Endothelial cell of umbilical vein (primary cell): ENCODE measurements at regions of chr4 and their contacts with region 1.

Region 1: GRCh38 chr4:38804654-38805295 is at the start of gene TLR1:
- DNase-seq: peak; percentile 89
- H3K4me3 ChIP-seq: peak within 1 kb of the TSS in 2 of 3 experiments; percentile 11 to 54
- H3K27ac ChIP-seq: peak within 1 kb of the TSS; percentile 30
- H3K4me1 ChIP-seq: peaks cover 19% of the 10 kb centered on the region
- H3K27me3 ChIP-seq: no peaks in the 10 kb centered on the region
- CTCF ChIP-seq: peak; percentile 15 to 36
- POLR2A ChIP-seq: no peak
- total RNA-seq, gene TLR1: 2.7 and 4.6 TPM in 2 replicates

Region 2: DNA sequence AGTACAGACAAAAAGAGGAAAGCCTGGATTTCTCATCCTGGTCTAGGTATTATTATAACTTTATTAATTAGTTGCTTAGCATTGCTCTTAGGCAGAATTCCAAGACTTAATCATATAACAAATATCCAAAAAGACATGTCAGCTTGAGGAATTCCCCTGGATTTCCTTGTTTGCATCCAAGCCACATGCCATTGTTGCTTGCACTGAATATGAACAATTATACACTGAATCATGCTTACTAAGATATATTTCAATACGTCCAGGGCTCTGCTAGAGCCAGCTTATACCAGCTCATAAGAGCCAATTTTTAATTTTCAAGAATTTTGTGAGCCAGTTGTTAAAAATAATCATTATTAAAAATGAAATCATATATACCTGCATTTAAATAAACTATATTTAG is 16.4 kb before region 1 on chr4:
- CTCF ChIA-PET with region 1: interaction called, 31 read pairs
- POLR2A ChIA-PET with region 1: no interaction called
- dilution Hi-C with region 1: no loop called
- intact Hi-C with region 1: no loop called
- DNase-seq: peak; percentile 57
- H3K4me3 ChIP-seq: no peak overlapping the region
- H3K27ac ChIP-seq: no peak overlapping the region
- H3K4me1 ChIP-seq: no peaks in the 10 kb centered on the region
- H3K27me3 ChIP-seq: no peaks in the 10 kb centered on the region
- CTCF ChIP-seq: no peak
- POLR2A ChIP-seq: no peak

Region 3: DNA sequence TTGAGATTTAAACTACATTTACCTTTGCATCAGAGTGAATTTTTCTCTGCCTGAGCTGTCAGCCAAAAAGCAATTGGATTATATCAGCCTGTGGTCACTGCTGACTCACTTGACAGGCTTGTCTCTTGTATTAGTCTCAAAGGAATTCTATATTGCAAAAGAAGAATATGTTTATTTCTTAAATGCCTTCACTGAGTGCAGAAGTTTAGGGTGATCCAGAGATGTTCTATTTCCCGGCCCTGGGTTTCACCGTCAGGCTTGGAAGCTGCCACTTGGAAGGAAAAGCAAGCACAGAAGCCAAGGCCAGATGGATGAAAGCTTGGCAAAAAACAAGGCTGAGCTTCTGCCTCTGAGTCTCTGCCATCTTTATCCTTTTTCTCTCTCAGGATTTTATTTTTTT is 143.8 kb after region 1 on chr4:
- CTCF ChIA-PET with region 1: no interaction called
- POLR2A ChIA-PET with region 1: no interaction called
- dilution Hi-C with region 1: no loop called
- intact Hi-C with region 1: no loop called
- DNase-seq: no peak
- H3K4me3 ChIP-seq: no peak overlapping the region
- H3K27ac ChIP-seq: no peak overlapping the region
- H3K4me1 ChIP-seq: peaks cover 6% of the 10 kb centered on the region
- H3K27me3 ChIP-seq: peaks cover 0 to 3% of the 10 kb centered on the region in 2 experiments
- CTCF ChIP-seq: no peak
- POLR2A ChIP-seq: no peak